CD4-positive, alpha-beta T cell (primary cell): ENCODE measurements at regions of chr5 and their contacts with region 1.

Region 1: DNA sequence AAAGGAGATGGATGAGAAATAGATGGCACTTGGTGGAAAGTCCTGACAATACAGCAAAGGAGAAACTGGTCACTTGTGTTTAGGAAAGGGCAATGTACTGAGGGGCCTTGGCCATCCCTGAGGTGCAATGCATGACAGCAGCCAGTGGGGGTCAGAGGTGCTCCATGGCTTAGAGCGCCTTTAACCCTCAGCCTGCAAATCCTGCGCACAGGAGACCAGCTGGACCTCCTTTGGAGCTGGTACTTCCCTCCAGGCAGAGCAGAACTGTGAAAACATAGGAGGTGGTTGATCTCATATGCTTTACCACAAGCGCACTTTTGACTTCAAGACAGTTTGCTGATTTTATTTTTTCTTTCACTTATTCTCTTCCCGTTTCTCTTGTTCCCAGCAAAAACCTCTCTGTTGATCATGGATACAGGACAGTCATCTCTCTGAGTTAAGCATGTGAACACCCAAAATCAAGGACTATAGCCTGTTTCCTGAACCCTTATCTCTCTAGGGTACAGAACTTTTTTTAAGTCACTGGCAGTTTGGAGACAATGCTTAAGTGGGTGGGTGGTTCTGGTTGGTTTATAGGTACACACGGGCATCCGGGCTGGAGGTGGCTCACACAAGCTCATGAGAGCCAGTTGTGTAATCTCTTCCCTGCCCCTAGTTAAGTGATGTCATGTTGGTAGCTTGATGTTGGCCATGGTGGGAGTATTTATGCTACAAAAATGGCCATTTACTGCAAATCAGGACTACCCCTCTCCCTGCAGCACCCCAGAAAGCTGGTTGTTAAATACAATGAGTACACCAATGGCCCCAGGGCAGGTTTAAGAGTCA is 37.6 kb upstream of the ANKRD55 start:
- DNase-seq: peak; percentile 57 to 88 (median 71)
- ATAC-seq: peak; percentile 97
- H3K4me3 ChIP-seq: peak overlapping the region; percentile 1
- H3K4me3 Mint-ChIP-seq: peak overlapping the region; percentile 60
- H3K27ac ChIP-seq: no peak overlapping the region
- H3K27ac Mint-ChIP-seq: peak overlapping the region; percentile 24
- H3K4me1 ChIP-seq: peaks cover 11% of the 10 kb centered on the region
- H3K4me1 Mint-ChIP-seq: peaks cover 19% of the 10 kb centered on the region
- H3K27me3 ChIP-seq: no peaks in the 10 kb centered on the region
- H3K27me3 Mint-ChIP-seq: no peaks in the 10 kb centered on the region
- CTCF ChIP-seq: peak; percentile 98

Region 2: DNA sequence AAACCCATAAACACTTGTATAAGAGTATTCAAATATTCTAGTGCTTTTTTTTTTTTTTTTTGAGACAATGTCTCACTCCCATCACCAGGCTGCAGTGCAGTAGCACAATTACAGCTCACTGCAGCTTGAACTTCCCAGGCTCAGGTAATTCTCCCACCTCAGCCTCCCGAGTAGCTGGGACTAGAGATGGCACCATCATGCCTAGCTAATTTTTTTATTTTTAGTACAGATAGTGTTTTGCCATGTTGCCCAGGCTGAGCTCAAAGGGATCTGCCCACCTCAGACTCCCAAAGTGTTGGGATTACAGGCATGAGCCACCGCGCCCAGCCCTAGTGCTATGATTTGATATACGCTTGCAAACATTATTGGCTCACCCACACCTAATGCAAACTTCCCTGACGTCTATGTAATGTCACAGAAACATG is 287.8 kb before region 1 on chr5:
- CTCF ChIA-PET with region 1: interaction called, 3 read pairs
- POLR2A ChIA-PET with region 1: no interaction called
- intact Hi-C with region 1: loop called (anchors 2 kb)
- DNase-seq: peak in 7 of 14 experiments; percentile 18 to 71 (median 38)
- ATAC-seq: peak; percentile 44
- H3K4me3 ChIP-seq: peak overlapping the region; percentile 11
- H3K4me3 Mint-ChIP-seq: peak overlapping the region; percentile 72
- H3K27ac ChIP-seq: peak overlapping the region in 1 of 2 donors; percentile 10
- H3K27ac Mint-ChIP-seq: peak overlapping the region; percentile 94
- H3K4me1 ChIP-seq: peaks cover 31% of the 10 kb centered on the region
- H3K4me1 Mint-ChIP-seq: peaks cover 90% of the 10 kb centered on the region
- H3K27me3 ChIP-seq: no peaks in the 10 kb centered on the region
- H3K27me3 Mint-ChIP-seq: no peaks in the 10 kb centered on the region
- CTCF ChIP-seq: peak; percentile 66

Region 3: GRCh38 chr5:56003179-56003578 is 267.6 kb before region 1 on chr5:
- CTCF ChIA-PET with region 1: no interaction called
- POLR2A ChIA-PET with region 1: no interaction called
- intact Hi-C with region 1: no loop called
- DNase-seq: no peak
- ATAC-seq: no peak
- H3K4me3 ChIP-seq: no peak overlapping the region
- H3K4me3 Mint-ChIP-seq: no peak overlapping the region
- H3K27ac ChIP-seq: no peak overlapping the region
- H3K27ac Mint-ChIP-seq: no peak overlapping the region
- H3K4me1 ChIP-seq: peaks cover 12% of the 10 kb centered on the region
- H3K4me1 Mint-ChIP-seq: peaks cover 44% of the 10 kb centered on the region
- H3K27me3 ChIP-seq: no peaks in the 10 kb centered on the region
- H3K27me3 Mint-ChIP-seq: no peaks in the 10 kb centered on the region
- CTCF ChIP-seq: no peak

Region 4: GRCh38 chr5:56095579-56096102 is 175.1 kb before region 1 on chr5:
- CTCF ChIA-PET with region 1: no interaction called
- POLR2A ChIA-PET with region 1: no interaction called
- intact Hi-C with region 1: no loop called
- DNase-seq: no peak
- ATAC-seq: no peak
- H3K4me3 ChIP-seq: no peak overlapping the region
- H3K4me3 Mint-ChIP-seq: peak overlapping the region; percentile 30
- H3K27ac ChIP-seq: peak overlapping the region; percentile 7 to 63
- H3K27ac Mint-ChIP-seq: peak overlapping the region; percentile 88
- H3K4me1 ChIP-seq: peaks cover 71% of the 10 kb centered on the region
- H3K4me1 Mint-ChIP-seq: peaks cover 88% of the 10 kb centered on the region
- H3K27me3 ChIP-seq: no peaks in the 10 kb centered on the region
- H3K27me3 Mint-ChIP-seq: no peaks in the 10 kb centered on the region
- CTCF ChIP-seq: no peak

Region 5: DNA sequence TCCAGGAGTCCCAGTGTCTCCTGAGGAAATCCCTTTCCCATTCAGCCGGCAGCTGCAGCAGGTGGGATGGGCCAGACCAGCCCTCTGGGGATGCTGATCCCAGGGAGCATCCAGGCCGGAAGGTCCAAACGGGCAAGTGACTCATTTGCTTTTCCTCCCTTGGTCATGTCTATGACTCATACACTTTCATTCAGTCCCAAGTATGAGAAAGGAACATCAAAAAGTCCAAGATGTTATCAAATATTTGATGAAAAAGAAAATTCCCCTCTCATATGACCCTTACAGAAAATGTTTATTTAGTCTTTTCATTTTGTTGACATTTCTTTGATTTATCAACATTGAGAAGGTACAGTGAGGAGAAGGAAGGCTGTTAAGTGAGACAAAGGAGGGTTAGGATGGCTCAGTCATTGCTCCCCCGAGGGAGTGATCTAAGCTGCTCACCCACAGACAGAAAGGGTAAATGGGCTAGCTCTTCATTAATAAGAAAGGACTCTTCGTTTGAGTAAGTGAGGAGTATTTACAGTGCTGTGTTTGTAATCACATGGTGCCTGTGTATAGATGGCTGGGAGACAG is 79.9 kb after region 1 on chr5:
- CTCF ChIA-PET with region 1: no interaction called
- POLR2A ChIA-PET with region 1: no interaction called
- intact Hi-C with region 1: no loop called
- DNase-seq: peak in 2 of 14 experiments; percentile 20 to 36
- ATAC-seq: no peak
- H3K4me3 ChIP-seq: no peak overlapping the region
- H3K4me3 Mint-ChIP-seq: no peak overlapping the region
- H3K27ac ChIP-seq: no peak overlapping the region
- H3K27ac Mint-ChIP-seq: no peak overlapping the region
- H3K4me1 ChIP-seq: no peaks in the 10 kb centered on the region
- H3K4me1 Mint-ChIP-seq: no peaks in the 10 kb centered on the region
- H3K27me3 ChIP-seq: no peaks in the 10 kb centered on the region
- H3K27me3 Mint-ChIP-seq: no peaks in the 10 kb centered on the region
- CTCF ChIP-seq: no peak

Region 6: DNA sequence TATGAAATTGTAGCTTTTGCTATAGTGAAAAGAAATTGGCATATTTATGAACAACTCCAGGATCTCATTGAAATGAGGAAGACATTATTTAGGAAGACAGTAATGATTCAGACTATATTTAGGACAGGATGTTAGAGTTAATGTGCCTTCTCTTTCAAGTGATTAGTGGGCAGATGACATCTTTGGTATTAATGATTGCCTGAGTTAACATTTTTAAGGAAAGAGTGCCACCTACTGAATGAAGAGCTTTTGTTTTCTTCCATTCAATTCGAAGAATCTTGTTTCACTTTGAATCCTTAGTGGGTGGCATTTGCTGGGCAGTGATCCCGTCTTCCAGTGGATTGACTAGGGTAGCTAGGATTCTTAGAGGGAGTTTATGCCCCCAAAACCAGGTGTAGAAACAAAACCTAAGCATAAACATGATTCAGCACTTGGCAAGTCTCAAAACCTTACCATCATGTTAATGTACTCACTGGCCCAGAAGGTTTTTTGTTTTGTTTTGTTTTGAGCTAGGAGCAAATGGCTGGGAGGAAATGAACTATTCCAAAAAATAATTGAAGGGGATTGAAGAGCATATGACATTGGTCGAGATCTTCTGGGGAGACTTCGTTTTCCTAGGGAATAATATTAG is 567.7 kb after region 1 on chr5:
- CTCF ChIA-PET with region 1: interaction called, 40 read pairs
- POLR2A ChIA-PET with region 1: interaction called, 28 read pairs
- intact Hi-C with region 1: loop called (anchors 1 kb)
- DNase-seq: peak in 4 of 14 experiments; percentile 20 to 81 (median 77)
- ATAC-seq: peak; percentile 66
- H3K4me3 ChIP-seq: no peak overlapping the region
- H3K4me3 Mint-ChIP-seq: peak overlapping the region; percentile 74
- H3K27ac ChIP-seq: peak overlapping the region in 1 of 2 donors; percentile 38
- H3K27ac Mint-ChIP-seq: peak overlapping the region; percentile 81
- H3K4me1 ChIP-seq: peaks cover 51% of the 10 kb centered on the region
- H3K4me1 Mint-ChIP-seq: peaks cover 92% of the 10 kb centered on the region
- H3K27me3 ChIP-seq: no peaks in the 10 kb centered on the region
- H3K27me3 Mint-ChIP-seq: no peaks in the 10 kb centered on the region
- CTCF ChIP-seq: peak; percentile 72

Region 7: DNA sequence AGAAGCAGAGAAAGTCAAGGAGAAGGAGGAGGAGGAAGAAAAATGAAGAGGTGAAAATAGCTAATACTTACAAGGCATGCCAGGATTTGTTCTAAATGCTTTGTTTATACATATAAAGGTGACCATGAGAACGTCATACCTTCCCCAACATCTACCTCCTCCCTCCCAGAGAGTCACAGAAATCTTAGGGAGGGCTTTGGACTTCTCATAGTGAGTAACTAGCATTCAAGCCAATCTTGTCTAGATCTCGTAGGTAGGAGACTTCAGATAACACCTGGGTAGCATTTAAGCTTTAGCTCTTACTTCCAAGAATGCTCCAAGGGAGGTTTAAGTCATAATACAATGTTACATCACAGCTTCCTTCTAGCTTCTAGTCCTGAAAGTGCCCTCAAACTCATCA is 866.6 kb after region 1 on chr5:
- CTCF ChIA-PET with region 1: no interaction called
- POLR2A ChIA-PET with region 1: no interaction called
- intact Hi-C with region 1: loop called in 1 of 2 experiments (anchors 2 kb)
- DNase-seq: no peak
- ATAC-seq: no peak
- H3K4me3 ChIP-seq: no peak overlapping the region
- H3K4me3 Mint-ChIP-seq: no peak overlapping the region
- H3K27ac ChIP-seq: no peak overlapping the region
- H3K27ac Mint-ChIP-seq: no peak overlapping the region
- H3K4me1 ChIP-seq: no peaks in the 10 kb centered on the region
- H3K4me1 Mint-ChIP-seq: no peaks in the 10 kb centered on the region
- H3K27me3 ChIP-seq: peaks cover 0 to 2% of the 10 kb centered on the region in 2 experiments
- H3K27me3 Mint-ChIP-seq: peaks cover 3% of the 10 kb centered on the region
- CTCF ChIP-seq: no peak